ENCODE measurements at regions of chr7 and their contacts with region 1.

Region 1: GRCh38 chr7:93043385-93043985 is 74.3 kb downstream of the SAMD9 start:
- DNase-seq: peak; percentile 95
- H3K4me3 ChIP-seq: peak overlapping the region; percentile 45
- CTCF ChIP-seq: no peak

Region 2: GRCh38 chr7:92833024-92833765 is 210.3 kb before region 1 on chr7:
- CTCF ChIA-PET with region 1: no interaction called
- POLR2A ChIA-PET with region 1: interaction called, 19 read pairs
- DNase-seq: no peak
- H3K4me3 ChIP-seq: peak overlapping the region; percentile 85
- CTCF ChIP-seq: peak; percentile 90

Region 3: GRCh38 chr7:92904292-92905131 is 139.0 kb before region 1 on chr7:
- CTCF ChIA-PET with region 1: interaction called, 3 read pairs
- POLR2A ChIA-PET with region 1: interaction called, 10 read pairs
- DNase-seq: peak; percentile 87
- H3K4me3 ChIP-seq: no peak overlapping the region
- CTCF ChIP-seq: no peak

Region 4: DNA sequence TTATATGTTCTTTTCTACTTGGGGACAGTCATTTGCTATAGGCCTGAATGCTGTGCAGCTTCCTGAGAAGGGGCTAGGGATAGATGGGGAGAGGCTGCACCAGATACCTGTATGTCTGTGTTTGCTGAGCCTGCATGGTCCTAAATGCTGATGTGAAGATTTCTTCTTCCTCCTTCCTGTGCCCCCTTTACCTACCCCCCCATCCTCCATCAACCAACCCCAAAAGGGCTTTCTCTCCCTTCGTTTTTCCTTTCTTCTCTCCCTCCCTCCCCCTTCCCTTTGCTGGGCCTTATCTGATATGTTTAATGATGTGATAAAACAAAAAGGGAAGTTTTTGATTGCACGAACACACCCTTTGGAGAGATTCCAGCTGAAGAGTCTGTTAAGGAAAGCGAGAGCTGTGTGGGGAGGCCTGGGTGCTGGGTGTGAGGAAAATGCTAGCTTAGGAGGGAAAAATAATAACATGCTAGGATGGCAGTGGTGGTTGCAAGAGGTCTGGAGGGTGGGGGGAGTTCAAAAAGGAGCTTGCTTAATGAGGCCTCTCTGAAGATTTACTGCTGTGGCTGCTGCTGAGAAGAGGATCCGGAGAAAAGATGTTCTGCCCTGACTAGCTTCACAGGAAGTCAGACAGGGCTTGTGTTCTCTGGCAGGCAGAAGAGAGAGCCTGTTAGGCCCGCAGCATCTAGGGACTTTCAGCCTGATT is 27.6 kb before region 1 on chr7:
- CTCF ChIA-PET with region 1: interaction called, 7 read pairs
- POLR2A ChIA-PET with region 1: interaction called, 10 read pairs
- DNase-seq: no peak
- H3K4me3 ChIP-seq: no peak overlapping the region; the same call in 1 of the 2 replicates
- CTCF ChIP-seq: no peak

Measured in AG04449 (cell line).